ENCODE measurements at regions of chr6 and their contacts with region 1.

Region 1: GRCh38 chr6:127971945-127972391 is 71.1 kb upstream of the THEMIS start:
- DNase-seq: peak; percentile 9 to 89 (median 84)
- ATAC-seq: peak; percentile 92
- H3K4me3 ChIP-seq: peak overlapping the region; percentile 43
- H3K4me3 Mint-ChIP-seq: peak overlapping the region; percentile 73 to 96 (median 88)
- H3K27ac ChIP-seq: peak overlapping the region; percentile 83
- H3K27ac Mint-ChIP-seq: peak overlapping the region; percentile 71 to 99 (median 97)
- H3K4me1 ChIP-seq: peaks cover 36 to 49% of the 10 kb centered on the region in 2 donors
- H3K4me1 Mint-ChIP-seq: peaks cover 15 to 83% (median 68%) of the 10 kb centered on the region in 7 donors
- H3K27me3 ChIP-seq: no peaks in the 10 kb centered on the region
- H3K27me3 Mint-ChIP-seq: no peaks in the 10 kb centered on the region

Region 2: DNA sequence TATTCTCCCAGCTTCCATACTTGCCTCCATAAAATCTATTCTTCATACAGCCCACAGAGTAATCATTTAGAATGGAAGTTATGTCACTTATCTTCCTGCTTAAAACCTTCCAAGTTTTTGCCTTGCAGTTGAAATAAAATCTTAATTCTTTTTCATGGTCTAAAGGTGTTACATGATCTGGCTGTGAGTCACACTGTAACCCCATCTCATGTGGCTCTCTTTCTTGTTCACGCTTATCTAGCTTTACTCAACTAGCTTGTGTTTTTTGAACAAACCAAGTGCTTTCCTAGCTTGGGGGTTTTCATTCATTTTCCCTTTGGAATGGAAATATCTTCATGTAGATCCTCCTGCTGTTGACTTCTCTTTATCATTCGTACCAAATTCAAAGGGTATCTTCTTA is 47.5 kb before region 1 on chr6:
- CTCF ChIA-PET with region 1: interaction called, 4 read pairs
- POLR2A ChIA-PET with region 1: interaction called, 12 read pairs
- intact Hi-C with region 1: loop called in 1 of 2 experiments (anchors 1 kb)
- DNase-seq: no peak
- ATAC-seq: no peak
- H3K4me3 ChIP-seq: no peak overlapping the region
- H3K4me3 Mint-ChIP-seq: peak overlapping the region in 5 of 10 donors; percentile 5 to 88 (median 21)
- H3K27ac ChIP-seq: no peak overlapping the region
- H3K27ac Mint-ChIP-seq: peak overlapping the region in 5 of 9 donors; percentile 6 to 98 (median 16)
- H3K4me1 ChIP-seq: peaks cover 54 to 59% of the 10 kb centered on the region in 2 donors
- H3K4me1 Mint-ChIP-seq: peaks cover 28 to 72% (median 59%) of the 10 kb centered on the region in 7 donors
- H3K27me3 ChIP-seq: no peaks in the 10 kb centered on the region
- H3K27me3 Mint-ChIP-seq: no peaks in the 10 kb centered on the region

Region 3: GRCh38 chr6:127951172-127951917 is 20.6 kb before region 1 on chr6:
- CTCF ChIA-PET with region 1: interaction called, 6 read pairs
- POLR2A ChIA-PET with region 1: interaction called, 8 read pairs
- intact Hi-C with region 1: loop called (anchors 1 kb)
- DNase-seq: peak in 7 of 9 donors; percentile 31 to 78 (median 69)
- ATAC-seq: peak; percentile 77
- H3K4me3 ChIP-seq: peak overlapping the region; percentile 21
- H3K4me3 Mint-ChIP-seq: peak overlapping the region; percentile 70 to 84 (median 79)
- H3K27ac ChIP-seq: peak overlapping the region; percentile 30
- H3K27ac Mint-ChIP-seq: peak overlapping the region; percentile 84 to 94 (median 91)
- H3K4me1 ChIP-seq: peaks cover 35 to 42% of the 10 kb centered on the region in 2 donors
- H3K4me1 Mint-ChIP-seq: peaks cover 32 to 74% (median 62%) of the 10 kb centered on the region in 7 donors
- H3K27me3 ChIP-seq: no peaks in the 10 kb centered on the region
- H3K27me3 Mint-ChIP-seq: no peaks in the 10 kb centered on the region

Region 4: DNA sequence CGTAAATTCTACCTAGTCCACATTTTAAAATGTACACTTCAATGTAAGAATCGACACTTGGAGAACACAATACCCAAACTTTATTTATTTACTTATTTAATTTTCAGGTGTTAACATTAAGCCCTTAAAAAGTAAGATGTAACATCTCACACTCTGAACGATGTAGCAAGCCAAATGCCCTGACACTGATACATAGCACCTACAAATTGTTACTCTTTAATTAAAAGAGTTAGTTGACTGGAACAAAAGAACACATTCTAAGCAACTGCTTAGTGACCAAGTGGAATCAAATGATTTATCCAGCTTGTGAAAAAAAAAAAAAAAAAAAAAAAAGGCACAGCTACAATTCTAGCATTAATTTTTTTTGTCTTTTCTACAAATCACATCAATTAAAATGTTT is 221.0 kb after region 1 on chr6:
- CTCF ChIA-PET with region 1: no interaction called
- POLR2A ChIA-PET with region 1: no interaction called
- intact Hi-C with region 1: no loop called
- DNase-seq: no peak
- ATAC-seq: no peak
- H3K4me3 ChIP-seq: no peak overlapping the region
- H3K4me3 Mint-ChIP-seq: no peak overlapping the region
- H3K27ac ChIP-seq: no peak overlapping the region
- H3K27ac Mint-ChIP-seq: no peak overlapping the region
- H3K4me1 ChIP-seq: no peaks in the 10 kb centered on the region
- H3K4me1 Mint-ChIP-seq: no peaks in the 10 kb centered on the region
- H3K27me3 ChIP-seq: no peaks in the 10 kb centered on the region
- H3K27me3 Mint-ChIP-seq: no peaks in the 10 kb centered on the region

Region 5: GRCh38 chr6:128327890-128328289 is 355.9 kb after region 1 on chr6:
- CTCF ChIA-PET with region 1: no interaction called
- POLR2A ChIA-PET with region 1: no interaction called
- intact Hi-C with region 1: loop called in 1 of 2 experiments (anchors 10 kb)
- DNase-seq: peak in 7 of 9 donors; percentile 13 to 37 (median 27)
- ATAC-seq: peak; percentile 76
- H3K4me3 ChIP-seq: no peak overlapping the region
- H3K4me3 Mint-ChIP-seq: no peak overlapping the region
- H3K27ac ChIP-seq: no peak overlapping the region
- H3K27ac Mint-ChIP-seq: no peak overlapping the region
- H3K4me1 ChIP-seq: no peaks in the 10 kb centered on the region
- H3K4me1 Mint-ChIP-seq: peaks cover 0 to 6% (median 0%) of the 10 kb centered on the region in 7 donors
- H3K27me3 ChIP-seq: no peaks in the 10 kb centered on the region
- H3K27me3 Mint-ChIP-seq: peaks cover 0 to 3% (median 0%) of the 10 kb centered on the region in 5 donors

Region 6: GRCh38 chr6:128914051-128914450 is 942.1 kb after region 1 on chr6:
- CTCF ChIA-PET with region 1: no interaction called
- POLR2A ChIA-PET with region 1: no interaction called
- intact Hi-C with region 1: no loop called
- DNase-seq: no peak
- ATAC-seq: no peak
- H3K4me3 ChIP-seq: no peak overlapping the region
- H3K4me3 Mint-ChIP-seq: no peak overlapping the region
- H3K27ac ChIP-seq: no peak overlapping the region
- H3K27ac Mint-ChIP-seq: no peak overlapping the region
- H3K4me1 ChIP-seq: no peaks in the 10 kb centered on the region
- H3K4me1 Mint-ChIP-seq: no peaks in the 10 kb centered on the region
- H3K27me3 ChIP-seq: no peaks in the 10 kb centered on the region
- H3K27me3 Mint-ChIP-seq: peaks cover 0 to 13% (median 10%) of the 10 kb centered on the region in 5 donors

Measured in naive thymus-derived CD4-positive, alpha-beta T cell (primary cell).